Endothelial cell of umbilical vein (primary cell): ENCODE measurements at regions of chr2 and their contacts with region 1.

Region 1: DNA sequence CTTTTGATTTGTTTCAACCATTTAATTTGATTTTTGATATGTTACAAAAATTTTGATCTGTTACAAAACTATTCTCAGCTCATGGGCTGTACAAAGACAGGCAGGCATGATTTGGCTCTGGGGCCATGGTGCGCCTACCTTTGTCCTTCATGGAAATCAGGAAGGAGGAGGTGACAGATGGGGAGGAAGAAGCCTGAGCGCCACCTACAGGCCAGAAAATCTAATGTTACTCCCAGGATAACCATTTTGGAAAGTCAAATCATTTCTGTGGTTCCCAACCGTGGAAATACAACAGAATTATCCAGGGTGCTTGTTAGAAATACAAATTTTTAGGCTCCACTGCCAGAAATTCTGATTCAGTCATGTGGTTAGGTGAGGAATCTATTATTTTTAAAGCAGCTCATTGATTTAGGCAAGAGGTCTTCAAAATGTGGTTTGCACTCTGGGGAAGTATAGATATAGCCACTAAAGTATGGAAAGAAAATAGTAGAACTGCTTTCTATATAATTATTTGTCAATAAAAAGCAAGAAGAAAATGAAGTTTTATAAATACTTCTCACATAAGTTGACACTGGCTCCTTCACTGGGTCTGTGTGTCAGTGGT is 93.9 kb downstream of the EVA1A start:
- DNase-seq: peak; percentile 18
- H3K4me3 ChIP-seq: no peak overlapping the region
- H3K27ac ChIP-seq: no peak overlapping the region
- H3K4me1 ChIP-seq: no peaks in the 10 kb centered on the region
- H3K27me3 ChIP-seq: peaks cover 5 to 24% of the 10 kb centered on the region in 2 experiments
- CTCF ChIP-seq: peak; percentile 44
- POLR2A ChIP-seq: no peak

Region 2: DNA sequence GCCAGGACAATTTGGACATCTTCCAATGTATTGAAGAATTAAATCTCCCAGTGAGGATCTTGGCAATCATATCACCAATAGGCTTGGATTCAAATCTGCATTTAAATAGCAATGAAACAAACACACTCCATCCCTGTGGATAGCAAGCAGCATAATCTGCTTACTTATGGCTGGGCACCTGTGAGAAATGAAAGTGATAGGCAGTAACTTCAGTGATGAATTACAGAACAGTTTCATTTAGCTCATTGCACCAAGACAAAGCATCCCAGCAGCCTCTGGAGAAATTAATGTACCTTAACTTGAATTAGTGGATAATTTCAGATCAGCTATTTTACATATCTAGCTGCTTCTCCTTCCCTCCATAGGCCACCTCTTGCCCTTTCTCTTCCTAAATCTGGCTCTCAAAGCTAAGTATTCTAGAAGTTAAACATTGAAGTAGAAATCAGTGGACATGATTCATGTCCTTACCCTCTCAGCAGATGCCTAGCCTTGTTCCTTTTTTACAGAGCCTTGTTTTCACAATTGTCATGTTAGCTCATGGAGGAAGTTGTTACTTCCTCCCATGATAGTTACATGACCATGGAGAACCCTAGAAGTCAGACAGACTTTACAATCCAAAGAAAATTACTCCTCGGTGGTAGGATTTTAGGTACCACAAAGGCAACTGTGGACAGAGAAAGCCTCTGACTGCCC is 179.0 kb before region 1 on chr2:
- CTCF ChIA-PET with region 1: no interaction called
- POLR2A ChIA-PET with region 1: no interaction called
- dilution Hi-C with region 1: no loop called
- intact Hi-C with region 1: no loop called
- DNase-seq: peak; percentile 14
- H3K4me3 ChIP-seq: no peak overlapping the region
- H3K27ac ChIP-seq: no peak overlapping the region
- H3K4me1 ChIP-seq: peaks cover 12% of the 10 kb centered on the region
- H3K27me3 ChIP-seq: no peaks in the 10 kb centered on the region
- CTCF ChIP-seq: no peak
- POLR2A ChIP-seq: no peak

Region 3: DNA sequence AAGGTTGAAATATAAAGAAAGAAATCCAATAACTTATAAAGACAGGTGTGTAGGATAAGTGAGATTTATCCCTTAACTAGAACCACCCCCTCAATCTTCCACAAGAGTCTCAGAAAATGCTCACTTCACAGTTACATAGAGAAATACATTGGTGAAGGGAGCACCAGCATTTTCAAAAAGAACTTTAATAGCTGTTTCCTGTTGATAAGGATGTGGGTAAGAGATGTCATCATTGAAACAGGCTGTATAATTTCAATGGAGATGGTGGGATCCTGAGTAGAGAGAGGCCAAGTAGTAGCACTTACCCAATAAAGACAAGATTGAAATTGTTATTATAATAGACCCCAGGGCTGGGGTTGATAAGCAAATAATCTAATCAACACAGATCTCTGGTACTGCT is 105.3 kb before region 1 on chr2:
- CTCF ChIA-PET with region 1: no interaction called
- POLR2A ChIA-PET with region 1: no interaction called
- dilution Hi-C with region 1: no loop called
- intact Hi-C with region 1: no loop called
- DNase-seq: peak; percentile 9
- H3K4me3 ChIP-seq: no peak overlapping the region
- H3K27ac ChIP-seq: no peak overlapping the region
- H3K4me1 ChIP-seq: no peaks in the 10 kb centered on the region
- H3K27me3 ChIP-seq: no peaks in the 10 kb centered on the region
- CTCF ChIP-seq: no peak
- POLR2A ChIP-seq: no peak

Region 4: GRCh38 chr2:75503048-75503607 is 36.3 kb after region 1 on chr2:
- CTCF ChIA-PET with region 1: interaction called, 32 read pairs
- POLR2A ChIA-PET with region 1: no interaction called
- dilution Hi-C with region 1: no loop called
- intact Hi-C with region 1: loop called (anchors 1 kb)
- DNase-seq: peak; percentile 97
- H3K4me3 ChIP-seq: no peak overlapping the region
- H3K27ac ChIP-seq: peak overlapping the region; percentile 96
- H3K4me1 ChIP-seq: peaks cover 74% of the 10 kb centered on the region
- H3K27me3 ChIP-seq: no peaks in the 10 kb centered on the region
- CTCF ChIP-seq: no peak
- POLR2A ChIP-seq: peak; percentile 68

Region 5: DNA sequence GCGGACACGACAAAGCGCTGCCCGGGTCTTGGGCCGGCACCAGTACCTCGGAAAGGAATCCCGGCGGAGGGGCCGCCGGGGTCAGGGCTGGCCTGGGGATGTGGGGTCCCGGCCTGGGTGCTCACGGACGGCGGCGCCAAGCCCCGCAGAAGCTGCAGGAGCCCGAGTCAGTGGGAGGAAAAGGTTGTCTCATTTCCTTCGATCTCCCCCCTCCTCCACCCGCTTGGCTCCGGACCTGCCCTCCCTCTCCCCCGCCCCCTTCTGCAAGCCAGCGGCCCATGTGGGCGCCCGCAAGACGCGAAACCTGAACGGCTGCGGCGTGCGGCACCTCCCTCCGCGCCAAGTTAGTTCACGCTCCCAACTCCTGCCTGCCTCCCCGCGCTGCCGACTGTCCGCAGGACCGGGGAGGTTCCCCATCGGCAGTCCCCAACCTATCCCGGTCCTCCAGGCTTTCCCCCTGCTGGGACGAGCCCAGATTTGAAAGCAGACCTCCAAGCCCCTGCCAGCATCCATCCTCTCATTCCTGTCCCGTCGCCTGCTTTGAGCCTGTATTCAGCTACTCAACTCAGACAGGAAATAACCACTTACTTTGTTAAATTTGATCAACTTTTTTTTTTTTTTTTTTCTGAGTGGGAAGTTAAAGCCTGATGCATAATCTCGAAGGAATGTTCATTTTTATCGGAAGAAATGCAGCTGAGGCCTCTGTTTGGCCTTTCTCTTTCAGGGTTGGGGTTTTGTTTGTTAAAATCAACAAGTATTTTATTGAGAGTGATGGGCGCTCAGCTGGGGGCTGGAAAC is 94.2 kb after region 1 on chr2 and contains the start of gene EVA1A:
- CTCF ChIA-PET with region 1: interaction called, 25 read pairs
- POLR2A ChIA-PET with region 1: no interaction called
- dilution Hi-C with region 1: no loop called
- intact Hi-C with region 1: loop called (anchors 1 kb)
- DNase-seq: peak; percentile 85
- H3K4me3 ChIP-seq: peak within 1 kb of the TSS; percentile 63 to 94 (median 91)
- H3K27ac ChIP-seq: peak within 1 kb of the TSS; percentile 72
- H3K4me1 ChIP-seq: peaks cover 35% of the 10 kb centered on the region
- H3K27me3 ChIP-seq: no peaks in the 10 kb centered on the region
- CTCF ChIP-seq: no peak
- POLR2A ChIP-seq: peak; percentile 78
- total RNA-seq, gene EVA1A: 59.7 and 66.5 TPM in 2 replicates

Region 6: GRCh38 chr2:75608684-75609333 is 142.0 kb after region 1 on chr2:
- CTCF ChIA-PET with region 1: interaction called, 228 read pairs
- POLR2A ChIA-PET with region 1: no interaction called
- dilution Hi-C with region 1: loop called (anchors 25 kb)
- intact Hi-C with region 1: loop called (anchors 1 kb)
- DNase-seq: peak; percentile 60
- H3K4me3 ChIP-seq: no peak overlapping the region
- H3K27ac ChIP-seq: no peak overlapping the region
- H3K4me1 ChIP-seq: peaks cover 6% of the 10 kb centered on the region
- H3K27me3 ChIP-seq: peaks cover 7 to 14% of the 10 kb centered on the region in 2 experiments
- CTCF ChIP-seq: peak; percentile 97 to 99
- POLR2A ChIP-seq: no peak

Region 7: GRCh38 chr2:75619956-75620740 is 153.3 kb after region 1 on chr2:
- CTCF ChIA-PET with region 1: interaction called, 54 read pairs
- POLR2A ChIA-PET with region 1: no interaction called
- dilution Hi-C with region 1: loop called (anchors 25 kb)
- intact Hi-C with region 1: no loop called
- DNase-seq: peak; percentile 43
- H3K4me3 ChIP-seq: no peak overlapping the region
- H3K27ac ChIP-seq: no peak overlapping the region
- H3K4me1 ChIP-seq: peaks cover 16% of the 10 kb centered on the region
- H3K27me3 ChIP-seq: no peaks in the 10 kb centered on the region
- CTCF ChIP-seq: no peak
- POLR2A ChIP-seq: no peak

Region 8: DNA sequence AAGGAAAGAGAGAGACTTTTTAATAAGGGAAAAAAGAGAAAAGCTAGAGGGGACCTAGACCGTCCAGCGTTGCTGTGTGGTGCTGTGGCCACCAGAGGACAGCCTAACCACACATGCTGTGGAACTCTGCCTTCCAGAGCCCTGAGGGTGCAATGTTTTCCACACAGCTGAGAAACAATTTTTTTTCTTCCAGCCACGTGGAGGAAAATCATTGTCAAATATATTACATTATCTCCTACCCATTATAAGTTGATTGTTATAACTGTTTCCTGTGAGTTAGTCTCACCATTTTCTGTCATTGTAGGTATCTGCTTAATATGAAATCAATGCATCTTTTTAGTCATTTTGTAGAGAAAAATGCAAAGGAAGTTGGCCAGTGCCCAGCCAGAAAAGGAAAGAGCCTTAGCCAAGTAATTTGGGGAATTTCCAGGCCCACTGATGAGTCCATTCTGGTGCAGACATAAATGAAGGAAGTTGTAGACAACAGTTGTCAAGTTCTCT is 173.9 kb after region 1 on chr2:
- CTCF ChIA-PET with region 1: interaction called, 12 read pairs
- POLR2A ChIA-PET with region 1: no interaction called
- dilution Hi-C with region 1: no loop called
- intact Hi-C with region 1: no loop called
- DNase-seq: peak; percentile 83
- H3K4me3 ChIP-seq: peak overlapping the region in 1 of 3 experiments; percentile 11
- H3K27ac ChIP-seq: peak overlapping the region; percentile 27
- H3K4me1 ChIP-seq: peaks cover 14% of the 10 kb centered on the region
- H3K27me3 ChIP-seq: peaks cover 12 to 17% of the 10 kb centered on the region in 2 experiments
- CTCF ChIP-seq: peak; percentile 99
- POLR2A ChIP-seq: no peak

Region 9: GRCh38 chr2:75800456-75800855 is 333.6 kb after region 1 on chr2:
- CTCF ChIA-PET with region 1: no interaction called
- POLR2A ChIA-PET with region 1: no interaction called
- dilution Hi-C with region 1: no loop called
- intact Hi-C with region 1: no loop called
- DNase-seq: no peak
- H3K4me3 ChIP-seq: no peak overlapping the region
- H3K27ac ChIP-seq: no peak overlapping the region
- H3K4me1 ChIP-seq: no peaks in the 10 kb centered on the region
- H3K27me3 ChIP-seq: no peaks in the 10 kb centered on the region
- CTCF ChIP-seq: no peak
- POLR2A ChIP-seq: no peak